ENCODE measurements at regions of chr20 and their contacts with region 1.

Region 1: DNA sequence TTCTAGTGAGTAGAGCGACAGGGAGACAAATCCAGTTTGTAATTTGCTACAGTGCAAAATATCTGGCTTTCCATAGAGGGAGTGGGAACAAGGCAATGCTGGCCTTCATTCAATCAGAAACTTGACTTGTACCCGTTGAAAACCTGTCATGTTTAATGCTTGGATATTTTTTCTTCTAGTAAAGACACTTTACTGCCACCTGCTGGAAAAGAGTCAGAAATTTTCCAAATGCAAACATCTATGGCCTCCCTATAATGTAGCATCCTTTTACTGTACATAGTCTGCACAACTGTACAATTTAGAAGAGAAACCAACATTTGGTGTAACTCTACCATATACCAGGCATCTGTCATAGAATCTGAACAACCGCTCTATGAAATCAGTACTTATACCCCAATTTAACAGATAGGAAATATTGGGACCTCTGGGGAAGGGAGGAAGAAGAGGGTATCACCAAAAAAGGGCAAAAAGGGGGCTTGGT is 16.7 kb upstream of the TBC1D20 start:
- DNase-seq: no peak
- H3K4me3 ChIP-seq: no peak overlapping the region
- H3K27ac ChIP-seq: no peak overlapping the region
- H3K4me1 ChIP-seq: peaks cover 14% of the 10 kb centered on the region
- H3K27me3 ChIP-seq: no peaks in the 10 kb centered on the region
- CTCF ChIP-seq: peak; percentile 71

Region 2: GRCh38 chr20:354298-355064 is 124.5 kb before region 1 on chr20:
- intact Hi-C with region 1: loop called (anchors 5 kb)
- DNase-seq: peak; percentile 69
- H3K4me3 ChIP-seq: no peak overlapping the region
- H3K27ac ChIP-seq: no peak overlapping the region
- H3K4me1 ChIP-seq: peaks cover 6% of the 10 kb centered on the region
- H3K27me3 ChIP-seq: no peaks in the 10 kb centered on the region
- CTCF ChIP-seq: peak; percentile 98

Region 3: DNA sequence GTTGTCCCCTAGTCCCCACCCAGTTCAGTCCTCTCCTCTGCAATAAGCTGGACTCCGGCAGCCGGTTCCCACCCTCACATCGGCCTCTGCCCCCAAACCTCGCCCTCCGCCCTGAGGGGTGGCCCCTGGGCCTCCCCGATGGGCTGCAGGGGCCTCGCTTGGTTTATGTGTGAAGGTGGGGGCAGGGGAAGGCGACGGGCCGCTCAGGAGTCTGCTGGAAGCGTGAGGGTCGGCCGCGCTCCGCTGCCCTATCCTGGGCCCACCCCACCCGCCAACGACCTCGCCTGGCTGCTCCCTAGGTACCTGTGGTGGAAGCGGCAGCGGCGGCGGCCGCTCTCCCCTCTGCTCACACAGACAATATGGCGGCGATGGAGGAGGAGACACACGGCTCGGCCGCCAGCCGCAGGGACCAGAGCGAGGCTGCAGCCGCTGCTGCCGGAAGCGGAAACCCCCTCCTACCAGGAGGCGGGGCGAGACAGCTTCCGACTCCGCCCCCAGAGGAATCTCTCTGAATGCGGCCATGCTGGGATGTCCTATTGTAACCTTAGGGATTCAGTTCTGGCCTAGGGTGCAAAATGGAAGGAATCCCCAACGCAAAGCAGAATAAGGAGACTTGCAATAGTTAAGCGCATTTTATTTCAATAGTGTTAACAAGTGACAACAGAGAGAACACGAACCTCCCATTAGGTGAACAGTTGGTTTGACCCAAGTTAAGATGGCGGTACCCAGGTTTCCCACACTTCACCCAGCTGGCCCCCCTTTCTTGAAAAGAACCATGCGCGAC is 64.6 kb after region 1 on chr20 and contains the start of gene CSNK2A1:
- intact Hi-C with region 1: no loop called
- DNase-seq: peak; percentile 93
- H3K4me3 ChIP-seq: peak within 1 kb of the TSS; percentile 85
- H3K27ac ChIP-seq: peak within 1 kb of the TSS; percentile 92
- H3K4me1 ChIP-seq: peaks cover 59% of the 10 kb centered on the region
- H3K27me3 ChIP-seq: no peaks in the 10 kb centered on the region
- CTCF ChIP-seq: no peak
- total RNA-seq, gene CSNK2A1: 122 TPM

Region 4: GRCh38 chr20:2042400-2042799 is 1563.4 kb after region 1 on chr20:
- intact Hi-C with region 1: no loop called
- DNase-seq: no peak
- H3K4me3 ChIP-seq: no peak overlapping the region
- H3K27ac ChIP-seq: no peak overlapping the region
- H3K4me1 ChIP-seq: no peaks in the 10 kb centered on the region
- H3K27me3 ChIP-seq: peaks cover 39% of the 10 kb centered on the region
- CTCF ChIP-seq: no peak